GM13976 (cell line): ENCODE measurements at regions of chr15 and their contacts with region 1.

Region 1: GRCh38 chr15:34514251-34514670 is 69.2 kb downstream of the GOLGA8B start:
- DNase-seq: peak; percentile 76
- CTCF ChIP-seq: no peak

Region 2: DNA sequence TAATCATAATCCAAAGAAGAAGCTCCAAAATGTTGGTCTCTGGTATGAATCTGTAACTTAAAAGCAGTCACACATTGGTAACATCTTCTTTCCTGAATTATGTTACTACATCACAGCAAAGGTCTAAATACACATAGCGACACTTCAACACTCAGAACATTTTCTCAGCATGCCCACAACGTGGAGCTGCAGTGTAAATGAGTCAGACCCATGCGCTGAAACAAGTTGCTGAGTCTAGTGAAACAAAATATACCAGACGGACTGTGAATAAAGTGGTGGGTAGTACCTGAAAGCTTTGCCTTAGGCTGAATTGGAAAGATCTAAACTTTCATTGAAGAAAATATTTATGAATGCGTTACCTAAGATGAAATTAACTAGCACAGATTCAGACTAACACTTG is 102.4 kb after region 1 on chr15:
- in situ Hi-C with region 1: loop called (anchors 25 kb)
- DNase-seq: no peak
- CTCF ChIP-seq: no peak